ENCODE measurements at regions of chr12 and their contacts with region 1.

Region 1: DNA sequence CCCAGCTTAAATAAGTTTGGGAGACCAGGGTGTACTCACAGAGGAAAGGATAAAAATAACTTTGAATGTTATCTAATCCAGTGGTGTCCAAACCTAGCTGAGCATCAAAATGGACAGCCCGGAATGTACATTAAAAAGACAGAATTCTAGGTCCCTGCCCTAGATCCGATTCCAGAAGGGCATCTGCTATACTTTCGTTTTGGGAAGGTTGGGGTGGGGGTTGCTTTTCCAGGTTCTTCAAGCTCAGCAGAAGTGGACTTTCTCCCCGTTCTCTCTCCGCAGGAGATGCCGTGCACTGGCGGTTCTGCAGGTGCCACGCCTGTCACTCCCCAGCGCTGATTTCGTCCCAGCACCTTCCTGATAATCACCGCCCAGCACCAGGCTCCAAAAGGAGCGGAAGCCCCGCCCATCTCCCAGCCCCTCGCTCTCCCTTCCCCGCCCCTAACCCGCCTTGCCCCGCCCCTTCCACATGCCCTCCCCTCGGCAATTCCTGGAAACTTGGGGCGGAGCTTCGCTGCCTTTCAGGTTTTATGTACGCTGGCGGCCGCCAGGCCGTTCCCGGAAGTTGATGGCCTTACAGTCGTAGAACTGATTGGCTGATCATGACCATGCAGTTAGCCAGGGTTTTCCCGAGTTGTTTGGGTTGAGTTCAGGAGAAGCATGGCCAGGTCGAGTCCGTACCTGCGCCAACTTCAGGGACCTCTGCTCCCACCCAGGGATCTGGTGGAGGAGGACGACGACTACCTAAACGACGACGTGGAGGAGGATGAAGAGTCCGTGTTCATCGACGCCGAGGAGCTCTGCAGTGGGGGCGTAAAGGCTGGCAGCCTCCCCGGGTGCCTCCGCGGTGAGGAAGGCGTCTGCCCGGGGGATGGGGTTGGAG is at the start of gene HELB:
- DNase-seq: peak; percentile 81 to 97 (median 91)
- ATAC-seq: peak; percentile 75 to 77
- H3K4me3 Mint-ChIP-seq: peak within 1 kb of the TSS; percentile 76 to 100 (median 97)
- H3K27ac Mint-ChIP-seq: peak within 1 kb of the TSS; percentile 87 to 100 (median 99)
- H3K4me1 Mint-ChIP-seq: peaks cover 24 to 61% (median 50%) of the 10 kb centered on the region in 4 donors
- H3K27me3 Mint-ChIP-seq: no peaks in the 10 kb centered on the region
- polyA plus RNA-seq, gene HELB: 22.0 to 28.7 (median 27.6) TPM

Region 2: DNA sequence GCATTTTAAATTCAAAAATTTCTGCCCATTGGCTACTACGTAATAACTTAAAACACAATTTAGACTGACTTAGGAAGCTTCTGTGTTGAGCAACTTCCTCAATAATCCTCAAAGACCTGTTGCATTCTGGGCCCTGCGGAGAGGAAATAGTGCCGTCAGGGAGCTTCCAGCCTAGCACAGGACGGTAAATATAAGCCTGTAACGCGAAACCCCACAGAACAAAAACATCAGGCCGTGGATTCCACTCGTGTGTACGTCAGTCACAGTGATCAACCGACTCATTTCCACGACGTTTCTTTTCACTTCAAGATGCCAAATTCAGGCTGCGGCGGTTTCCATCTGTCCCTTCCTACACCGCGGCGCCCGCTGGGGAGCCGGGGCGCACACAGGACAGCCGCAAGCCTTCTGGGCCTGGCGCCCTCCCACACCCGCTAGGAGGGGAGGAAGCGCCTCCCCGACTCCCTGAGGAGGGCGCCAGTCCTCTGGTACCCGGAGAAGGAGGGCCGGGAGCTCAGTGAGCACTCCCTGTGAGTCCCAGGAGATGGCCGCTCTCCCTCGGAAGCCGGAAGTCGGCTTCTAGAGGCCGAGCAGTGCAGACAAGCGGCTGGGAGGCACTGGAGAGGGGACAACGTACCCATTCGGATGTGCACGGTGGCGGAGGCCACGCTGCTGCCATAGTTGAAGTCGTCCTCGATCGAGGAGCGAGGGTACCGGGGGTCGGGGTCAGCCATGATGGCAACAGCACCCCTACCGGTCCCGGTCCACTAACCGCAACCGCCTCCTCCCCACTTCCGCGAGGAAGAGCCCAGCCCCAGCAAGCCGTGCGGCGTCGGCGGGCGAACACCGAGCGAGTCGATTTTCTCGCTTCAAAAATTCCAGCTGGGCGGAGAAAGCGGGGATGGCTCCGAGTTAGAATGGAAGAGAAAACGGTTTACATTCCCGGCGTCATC is 132.7 kb before region 1 on chr12 and contains the start of gene TMBIM4:
- POLR2A ChIA-PET with region 1: interaction called, 15 read pairs
- DNase-seq: peak; percentile 72 to 92 (median 82)
- ATAC-seq: peak; percentile 79 to 82
- H3K4me3 Mint-ChIP-seq: peak within 1 kb of the TSS; percentile 93 to 98 (median 96)
- H3K27ac Mint-ChIP-seq: peak within 1 kb of the TSS; percentile 94 to 99 (median 98)
- H3K4me1 Mint-ChIP-seq: peaks cover 19 to 51% (median 45%) of the 10 kb centered on the region in 4 donors
- H3K27me3 Mint-ChIP-seq: peaks cover 0 to 2% (median 0%) of the 10 kb centered on the region in 5 donors
- polyA plus RNA-seq, gene TMBIM4: 241 to 335 (median 328) TPM

Region 3: DNA sequence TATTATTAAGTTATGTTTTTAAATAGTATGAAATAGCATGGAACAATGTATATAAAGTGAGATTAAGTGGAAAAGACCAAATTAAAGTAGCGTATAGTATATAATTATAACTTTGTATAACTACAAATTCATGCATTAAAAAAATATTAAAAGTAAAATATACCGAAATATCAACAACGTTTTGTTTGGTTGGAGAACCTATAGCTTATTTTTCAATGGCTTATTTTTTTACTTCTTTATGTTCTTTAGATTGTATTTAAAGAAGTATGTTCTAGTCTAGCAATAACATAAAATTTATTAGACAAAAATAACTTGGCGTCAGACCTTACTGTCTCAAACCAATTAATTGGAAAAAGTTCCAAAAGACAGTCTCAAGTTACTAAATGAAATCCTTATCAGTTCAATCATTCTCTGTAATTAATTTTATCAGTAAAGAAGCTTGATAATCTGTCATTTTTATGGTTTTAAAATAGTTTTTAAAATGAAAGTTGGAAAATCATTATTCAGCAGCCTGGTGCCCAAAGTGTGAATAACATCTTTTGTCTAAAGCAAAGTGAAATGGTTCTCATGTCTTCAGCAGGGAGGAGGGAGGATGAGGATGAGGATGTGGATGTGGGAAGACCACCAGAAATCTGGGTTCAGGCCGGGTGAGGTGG is 66.4 kb before region 1 on chr12:
- POLR2A ChIA-PET with region 1: no interaction called
- DNase-seq: peak in 1 of 10 donors; percentile 6
- ATAC-seq: no peak
- H3K4me3 Mint-ChIP-seq: peak overlapping the region in 9 of 10 donors; percentile 0 to 64 (median 47)
- H3K27ac Mint-ChIP-seq: no peak overlapping the region
- H3K4me1 Mint-ChIP-seq: peaks cover 0 to 23% (median 1%) of the 10 kb centered on the region in 4 donors
- H3K27me3 Mint-ChIP-seq: peaks cover 17 to 44% (median 31%) of the 10 kb centered on the region in 5 donors

Region 4: GRCh38 chr12:66269757-66270383 is 32.3 kb before region 1 on chr12:
- POLR2A ChIA-PET with region 1: interaction called, 12 read pairs
- DNase-seq: peak in 3 of 10 donors; percentile 39 to 61 (median 59)
- ATAC-seq: peak; percentile 60 to 70
- H3K4me3 Mint-ChIP-seq: no peak overlapping the region
- H3K27ac Mint-ChIP-seq: no peak overlapping the region
- H3K4me1 Mint-ChIP-seq: peaks cover 0 to 11% (median under 1%) of the 10 kb centered on the region in 4 donors
- H3K27me3 Mint-ChIP-seq: peaks cover 0 to 4% (median 2%) of the 10 kb centered on the region in 5 donors

Region 5: DNA sequence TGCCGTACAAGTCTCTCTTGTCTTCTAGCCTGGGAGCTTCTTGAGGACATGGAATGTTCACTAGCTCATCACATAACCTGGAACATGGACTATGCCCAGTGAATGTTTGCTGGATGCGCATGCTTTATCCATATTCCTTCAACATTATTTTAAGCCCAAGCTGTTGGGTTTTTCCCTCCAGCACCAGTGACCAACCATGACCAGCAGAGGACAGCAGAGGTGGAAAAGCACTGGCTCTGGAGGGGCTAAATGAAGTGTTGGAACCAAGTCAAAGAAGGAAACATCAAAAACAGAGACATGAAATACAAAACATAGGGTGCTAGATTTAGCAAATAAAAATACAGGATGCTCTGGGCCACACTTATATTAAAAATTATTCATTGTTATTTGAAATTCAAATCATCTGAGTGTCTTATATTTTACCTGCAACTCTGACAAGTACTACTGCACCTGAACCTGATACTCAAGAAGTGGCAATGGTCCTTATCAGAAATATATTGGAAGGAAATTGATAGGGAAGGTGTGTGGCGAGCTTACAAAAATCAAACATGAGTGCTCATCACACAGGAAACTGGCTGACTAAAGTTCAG is 23.0 kb before region 1 on chr12:
- POLR2A ChIA-PET with region 1: interaction called, 11 read pairs
- DNase-seq: peak in 9 of 10 donors; percentile 27 to 77 (median 54)
- ATAC-seq: peak; percentile 58 to 82
- H3K4me3 Mint-ChIP-seq: peak overlapping the region in 5 of 10 donors; percentile 12 to 35 (median 28)
- H3K27ac Mint-ChIP-seq: peak overlapping the region in 3 of 10 donors; percentile 12 to 41 (median 31)
- H3K4me1 Mint-ChIP-seq: peaks cover 19 to 47% (median 35%) of the 10 kb centered on the region in 4 donors
- H3K27me3 Mint-ChIP-seq: no peaks in the 10 kb centered on the region

Region 6: GRCh38 chr12:66288121-66288520 is 14.1 kb before region 1 on chr12:
- POLR2A ChIA-PET with region 1: interaction called, 60 read pairs
- DNase-seq: peak in 9 of 10 donors; percentile 43 to 91 (median 78)
- ATAC-seq: peak; percentile 98 to 99
- H3K4me3 Mint-ChIP-seq: peak overlapping the region; percentile 38 to 81 (median 70)
- H3K27ac Mint-ChIP-seq: peak overlapping the region in 9 of 10 donors; percentile 30 to 89 (median 83)
- H3K4me1 Mint-ChIP-seq: peaks cover 41 to 89% (median 81%) of the 10 kb centered on the region in 4 donors
- H3K27me3 Mint-ChIP-seq: no peaks in the 10 kb centered on the region

Region 7: DNA sequence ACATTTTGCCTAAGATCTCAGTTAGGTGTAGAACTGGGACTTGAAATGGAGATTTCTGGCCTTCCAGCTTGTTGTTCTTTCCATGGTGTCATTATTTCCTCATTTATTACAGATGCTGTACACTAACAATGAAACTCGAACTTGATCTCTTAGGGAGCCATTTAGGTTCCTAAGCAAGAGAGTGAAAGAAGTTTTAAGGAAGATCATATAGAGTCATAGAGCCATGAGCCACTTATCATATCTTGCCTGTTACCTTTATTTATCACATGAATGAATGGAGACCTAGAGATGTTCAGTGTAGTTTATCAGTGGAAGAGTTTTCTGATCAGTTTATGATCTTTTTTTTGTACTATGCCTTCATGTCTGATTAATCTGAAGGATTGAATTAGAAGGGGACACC is 10.0 kb after region 1 on chr12:
- POLR2A ChIA-PET with region 1: interaction called, 11 read pairs
- DNase-seq: no peak
- ATAC-seq: no peak
- H3K4me3 Mint-ChIP-seq: peak overlapping the region; percentile 40 to 78 (median 67)
- H3K27ac Mint-ChIP-seq: peak overlapping the region in 9 of 10 donors; percentile 1 to 54 (median 21)
- H3K4me1 Mint-ChIP-seq: peaks cover 35 to 78% (median 71%) of the 10 kb centered on the region in 4 donors
- H3K27me3 Mint-ChIP-seq: no peaks in the 10 kb centered on the region

Region 8: GRCh38 chr12:66438593-66438992 is 136.4 kb after region 1 on chr12:
- POLR2A ChIA-PET with region 1: no interaction called
- DNase-seq: no peak
- ATAC-seq: no peak
- H3K4me3 Mint-ChIP-seq: no peak overlapping the region
- H3K27ac Mint-ChIP-seq: no peak overlapping the region
- H3K4me1 Mint-ChIP-seq: no peaks in the 10 kb centered on the region
- H3K27me3 Mint-ChIP-seq: peaks cover 0 to 2% (median 0%) of the 10 kb centered on the region in 5 donors